ENCODE measurements at regions of chr17 and their contacts with region 1.

Region 1: GRCh38 chr17:47615766-47616424 is 33.8 kb upstream of the KPNB1 start:
- DNase-seq: no peak
- ATAC-seq: peak; percentile 36 to 58 (median 47)
- H3K4me3 ChIP-seq: no peak overlapping the region
- H3K27ac ChIP-seq: peak overlapping the region in 1 of 12 donors; percentile 19
- H3K4me1 ChIP-seq: peaks cover 0 to 24% (median 10%) of the 10 kb centered on the region in 12 donors
- H3K27me3 ChIP-seq: no peaks in the 10 kb centered on the region
- CTCF ChIP-seq: peak; percentile 66 to 86 (median 80)
- POLR2A ChIP-seq: no peak

Region 2: DNA sequence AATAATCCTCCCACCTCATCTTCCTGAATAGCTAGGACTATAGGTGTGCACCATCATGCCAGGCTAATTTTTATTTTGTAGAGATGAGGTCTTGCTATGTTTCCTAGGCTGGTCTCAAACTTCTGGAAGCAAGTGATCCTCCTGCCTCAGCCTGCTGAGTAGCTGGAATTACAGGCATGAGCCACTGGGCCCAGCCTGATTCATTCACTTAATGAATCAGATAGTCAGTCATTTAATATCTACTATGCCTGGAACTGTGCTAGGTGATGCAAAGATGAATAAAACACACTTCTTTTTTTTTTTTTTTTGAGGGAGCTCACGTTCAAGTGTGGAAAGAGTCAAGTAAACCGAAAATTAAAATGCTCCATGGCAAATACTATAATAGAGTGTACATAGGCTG is 252.7 kb before region 1 on chr17:
- intact Hi-C with region 1: loop called in 4 of 10 experiments (anchors 5 to 10 kb)
- DNase-seq: no peak
- ATAC-seq: no peak
- H3K4me3 ChIP-seq: no peak overlapping the region
- H3K27ac ChIP-seq: no peak overlapping the region
- H3K4me1 ChIP-seq: no peaks in the 10 kb centered on the region
- H3K27me3 ChIP-seq: no peaks in the 10 kb centered on the region
- CTCF ChIP-seq: no peak
- POLR2A ChIP-seq: no peak

Region 3: GRCh38 chr17:47368262-47368661 is 247.6 kb before region 1 on chr17:
- intact Hi-C with region 1: loop called in 4 of 10 experiments (anchors 5 to 10 kb)
- DNase-seq: no peak
- ATAC-seq: no peak
- H3K4me3 ChIP-seq: no peak overlapping the region
- H3K27ac ChIP-seq: no peak overlapping the region
- H3K4me1 ChIP-seq: no peaks in the 10 kb centered on the region
- H3K27me3 ChIP-seq: no peaks in the 10 kb centered on the region
- CTCF ChIP-seq: no peak
- POLR2A ChIP-seq: no peak

Region 4: GRCh38 chr17:47840740-47841603 is 225.1 kb after region 1 on chr17 and contains the start of gene SCRN2:
- intact Hi-C with region 1: no loop called
- DNase-seq: peak; percentile 89 to 96 (median 91)
- ATAC-seq: peak; percentile 81 to 95 (median 92)
- H3K4me3 ChIP-seq: peak within 1 kb of the TSS; percentile 57 to 96 (median 90)
- H3K27ac ChIP-seq: peak within 1 kb of the TSS in 11 of 12 donors; percentile 55 to 84 (median 75)
- H3K4me1 ChIP-seq: peaks cover 4 to 28% (median 19%) of the 10 kb centered on the region in 12 donors
- H3K27me3 ChIP-seq: peaks cover 0 to 25% (median 8%) of the 10 kb centered on the region in 9 donors
- CTCF ChIP-seq: peak; percentile 93 to 99 (median 98)
- POLR2A ChIP-seq: no peak
- total RNA-seq, gene SCRN2: 29.4 to 42.9 (median 33.9) TPM